ENCODE measurements at regions of chr19 and their contacts with region 1.

Region 1: DNA sequence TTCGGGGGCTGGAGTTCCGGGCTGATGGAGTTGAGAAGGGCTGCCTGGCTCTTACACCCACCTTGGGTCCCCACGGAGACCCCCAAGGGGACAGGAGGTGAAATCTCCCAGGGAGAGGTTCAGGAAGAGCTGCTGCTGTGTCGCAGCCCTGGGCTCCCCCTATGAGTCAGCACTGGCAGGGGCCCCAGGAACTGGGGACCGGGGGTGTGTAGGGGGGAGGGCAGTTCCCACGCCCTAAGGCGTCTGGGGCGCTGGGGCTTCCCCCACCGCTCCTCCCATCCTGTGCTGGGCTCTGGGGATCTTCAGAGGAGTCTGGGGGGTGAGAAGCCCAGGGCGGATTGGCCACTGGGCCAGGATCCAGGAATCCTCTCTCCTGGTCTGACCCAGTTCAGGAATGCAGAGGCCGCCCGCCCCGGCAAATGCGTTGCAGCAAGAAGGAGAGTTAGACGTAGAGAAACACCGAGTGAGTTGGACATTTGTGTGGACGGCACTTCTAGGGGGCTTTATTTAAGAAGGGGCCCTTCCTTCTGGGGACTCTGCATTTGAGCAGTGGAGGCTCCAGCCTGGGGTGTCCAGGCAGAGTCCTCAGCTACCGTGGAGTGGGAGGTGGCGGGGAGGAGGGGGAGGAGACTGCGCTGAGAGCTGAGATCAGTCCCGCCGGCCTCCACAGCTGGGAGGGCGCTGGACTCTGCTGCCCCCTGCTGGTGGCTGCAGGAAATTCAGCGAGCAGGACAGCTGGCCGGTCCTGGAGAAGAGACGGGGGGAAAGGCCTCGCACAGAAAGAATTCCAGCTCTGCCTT is 15.0 kb upstream of the NANOS3 start:
- DNase-seq: peak; percentile 72 to 93 (median 83)
- ATAC-seq: peak; percentile 92
- H3K4me3 ChIP-seq: peak overlapping the region; percentile 79
- H3K4me3 Mint-ChIP-seq: peak overlapping the region; percentile 83 to 98 (median 94)
- H3K27ac ChIP-seq: peak overlapping the region; percentile 86
- H3K27ac Mint-ChIP-seq: peak overlapping the region; percentile 70 to 99 (median 93)
- H3K4me1 ChIP-seq: peaks cover 13 to 20% of the 10 kb centered on the region in 2 donors
- H3K4me1 Mint-ChIP-seq: peaks cover 21 to 42% (median 23%) of the 10 kb centered on the region in 7 donors
- H3K27me3 ChIP-seq: peaks cover 7 to 12% of the 10 kb centered on the region in 2 donors
- H3K27me3 Mint-ChIP-seq: peaks cover 19 to 32% (median 20%) of the 10 kb centered on the region in 5 donors

Region 2: DNA sequence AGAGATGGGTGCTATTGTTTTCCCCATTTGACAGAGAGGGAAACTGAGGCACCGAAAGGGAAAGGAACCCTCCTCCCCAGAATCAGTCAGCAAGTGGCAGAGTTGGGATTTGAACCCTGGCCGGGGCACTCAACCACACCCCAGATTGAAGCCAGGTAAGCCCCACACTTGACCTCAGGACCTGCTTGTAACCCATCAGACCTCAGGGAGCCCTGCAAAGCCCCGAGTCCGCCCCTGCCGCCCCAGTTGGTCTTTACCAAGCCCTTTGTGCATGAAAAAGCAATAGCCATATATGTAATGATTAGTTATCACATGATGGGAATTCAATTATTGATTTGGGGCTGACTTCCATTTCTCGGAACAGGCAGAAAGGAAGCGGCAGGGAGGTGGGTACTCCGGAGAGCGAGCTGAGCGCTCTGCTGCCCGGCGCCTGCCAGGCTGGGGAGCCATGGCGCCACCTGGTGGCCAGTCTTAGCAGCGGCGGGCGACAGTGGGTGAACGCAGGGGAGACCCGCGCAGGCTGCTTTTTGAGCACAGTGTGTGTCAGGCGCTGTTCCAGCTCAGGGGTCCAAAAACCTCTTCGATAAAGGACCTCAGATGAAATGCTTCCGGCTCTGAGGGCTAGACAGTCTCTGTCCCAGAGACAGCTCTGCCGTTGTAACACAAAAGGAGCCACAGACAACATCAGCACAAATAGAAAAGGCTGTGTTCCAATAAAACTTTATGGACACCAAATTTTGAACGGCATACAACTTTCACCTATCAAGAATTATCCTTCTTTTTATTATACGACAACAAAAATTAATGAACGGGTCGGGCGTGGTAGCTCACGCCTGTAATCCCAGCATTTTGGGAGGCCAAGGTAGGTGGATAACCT is 272.7 kb before region 1 on chr19:
- CTCF ChIA-PET with region 1: interaction called, 4 read pairs
- POLR2A ChIA-PET with region 1: no interaction called
- intact Hi-C with region 1: loop called in 1 of 2 experiments (anchors 2 kb)
- DNase-seq: peak; percentile 59 to 91 (median 82)
- ATAC-seq: peak; percentile 98
- H3K4me3 ChIP-seq: no peak overlapping the region
- H3K4me3 Mint-ChIP-seq: peak overlapping the region in 2 of 10 donors; percentile 26 to 27
- H3K27ac ChIP-seq: no peak overlapping the region
- H3K27ac Mint-ChIP-seq: no peak overlapping the region
- H3K4me1 ChIP-seq: peaks cover 0 to 4% of the 10 kb centered on the region in 2 donors
- H3K4me1 Mint-ChIP-seq: peaks cover 0 to 2% (median 0%) of the 10 kb centered on the region in 7 donors
- H3K27me3 ChIP-seq: peaks cover 0 to 4% of the 10 kb centered on the region in 2 donors
- H3K27me3 Mint-ChIP-seq: peaks cover 0 to 18% (median 10%) of the 10 kb centered on the region in 5 donors

Region 3: GRCh38 chr19:13731147-13731964 is 130.6 kb before region 1 on chr19:
- CTCF ChIA-PET with region 1: interaction called, 4 read pairs
- POLR2A ChIA-PET with region 1: interaction called, 4 read pairs
- intact Hi-C with region 1: loop called in 1 of 2 experiments (anchors 5 kb)
- DNase-seq: peak; percentile 85 to 95 (median 91)
- ATAC-seq: peak; percentile 100
- H3K4me3 ChIP-seq: peak overlapping the region; percentile 89
- H3K4me3 Mint-ChIP-seq: peak overlapping the region; percentile 82 to 95 (median 92)
- H3K27ac ChIP-seq: peak overlapping the region; percentile 75
- H3K27ac Mint-ChIP-seq: peak overlapping the region; percentile 68 to 95 (median 88)
- H3K4me1 ChIP-seq: peaks cover 3 to 7% of the 10 kb centered on the region in 2 donors
- H3K4me1 Mint-ChIP-seq: peaks cover 6 to 19% (median 11%) of the 10 kb centered on the region in 7 donors
- H3K27me3 ChIP-seq: no peaks in the 10 kb centered on the region
- H3K27me3 Mint-ChIP-seq: no peaks in the 10 kb centered on the region

Region 4: DNA sequence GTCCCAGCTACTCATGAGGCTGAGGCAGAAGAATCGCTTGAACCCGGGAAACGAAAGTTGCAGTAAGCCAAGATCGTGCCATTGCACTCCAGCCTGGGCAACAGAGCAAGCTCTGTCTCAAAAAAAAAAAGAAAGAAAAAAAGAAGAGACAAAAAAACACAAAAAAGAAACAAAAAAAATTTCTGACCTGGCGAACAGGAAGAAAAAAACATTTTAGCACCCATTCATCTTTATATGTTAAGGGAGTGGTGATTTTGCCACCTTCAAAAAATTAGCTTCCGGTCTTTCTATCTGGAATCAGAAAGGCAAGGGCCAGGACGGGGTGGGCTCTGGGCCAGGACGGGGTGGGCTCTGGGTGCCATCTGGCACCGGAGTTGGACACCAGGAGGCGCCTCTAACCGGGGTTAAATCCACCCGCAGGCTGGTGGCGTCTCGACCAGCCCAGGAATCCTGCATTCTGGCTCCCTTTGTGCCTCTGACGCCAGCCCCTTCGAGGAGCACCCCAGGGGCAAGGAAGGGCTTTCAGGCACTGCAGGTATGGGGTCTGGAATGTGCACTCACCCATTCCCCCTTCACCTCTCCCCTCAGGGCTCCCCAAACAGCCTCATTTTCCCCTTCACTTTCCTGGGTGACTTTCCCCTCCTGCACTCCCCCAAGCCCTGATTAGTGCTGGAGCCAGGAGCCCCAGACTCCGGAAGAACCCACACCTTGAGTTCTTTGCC is 77.0 kb before region 1 on chr19:
- CTCF ChIA-PET with region 1: interaction called, 227 read pairs
- POLR2A ChIA-PET with region 1: interaction called, 86 read pairs
- intact Hi-C with region 1: loop called (anchors 1 kb)
- DNase-seq: peak; percentile 51 to 73 (median 63)
- ATAC-seq: peak; percentile 87
- H3K4me3 ChIP-seq: no peak overlapping the region
- H3K4me3 Mint-ChIP-seq: peak overlapping the region; percentile 51 to 72 (median 68)
- H3K27ac ChIP-seq: no peak overlapping the region
- H3K27ac Mint-ChIP-seq: peak overlapping the region; percentile 58 to 90 (median 80)
- H3K4me1 ChIP-seq: peaks cover 28 to 32% of the 10 kb centered on the region in 2 donors
- H3K4me1 Mint-ChIP-seq: peaks cover 7 to 46% (median 32%) of the 10 kb centered on the region in 7 donors
- H3K27me3 ChIP-seq: no peaks in the 10 kb centered on the region
- H3K27me3 Mint-ChIP-seq: no peaks in the 10 kb centered on the region

Region 5: GRCh38 chr19:13839130-13839937 is 22.6 kb before region 1 on chr19:
- CTCF ChIA-PET with region 1: interaction called, 13 read pairs
- POLR2A ChIA-PET with region 1: interaction called, 12 read pairs
- intact Hi-C with region 1: loop called (anchors 1 kb)
- DNase-seq: peak; percentile 53 to 90 (median 59)
- ATAC-seq: peak; percentile 21
- H3K4me3 ChIP-seq: peak overlapping the region; percentile 50
- H3K4me3 Mint-ChIP-seq: peak overlapping the region; percentile 76 to 96 (median 86)
- H3K27ac ChIP-seq: peak overlapping the region; percentile 91
- H3K27ac Mint-ChIP-seq: peak overlapping the region; percentile 90 to 98 (median 94)
- H3K4me1 ChIP-seq: peaks cover 67 to 76% of the 10 kb centered on the region in 2 donors
- H3K4me1 Mint-ChIP-seq: peaks cover 11 to 78% (median 55%) of the 10 kb centered on the region in 7 donors
- H3K27me3 ChIP-seq: no peaks in the 10 kb centered on the region
- H3K27me3 Mint-ChIP-seq: no peaks in the 10 kb centered on the region

Region 6: DNA sequence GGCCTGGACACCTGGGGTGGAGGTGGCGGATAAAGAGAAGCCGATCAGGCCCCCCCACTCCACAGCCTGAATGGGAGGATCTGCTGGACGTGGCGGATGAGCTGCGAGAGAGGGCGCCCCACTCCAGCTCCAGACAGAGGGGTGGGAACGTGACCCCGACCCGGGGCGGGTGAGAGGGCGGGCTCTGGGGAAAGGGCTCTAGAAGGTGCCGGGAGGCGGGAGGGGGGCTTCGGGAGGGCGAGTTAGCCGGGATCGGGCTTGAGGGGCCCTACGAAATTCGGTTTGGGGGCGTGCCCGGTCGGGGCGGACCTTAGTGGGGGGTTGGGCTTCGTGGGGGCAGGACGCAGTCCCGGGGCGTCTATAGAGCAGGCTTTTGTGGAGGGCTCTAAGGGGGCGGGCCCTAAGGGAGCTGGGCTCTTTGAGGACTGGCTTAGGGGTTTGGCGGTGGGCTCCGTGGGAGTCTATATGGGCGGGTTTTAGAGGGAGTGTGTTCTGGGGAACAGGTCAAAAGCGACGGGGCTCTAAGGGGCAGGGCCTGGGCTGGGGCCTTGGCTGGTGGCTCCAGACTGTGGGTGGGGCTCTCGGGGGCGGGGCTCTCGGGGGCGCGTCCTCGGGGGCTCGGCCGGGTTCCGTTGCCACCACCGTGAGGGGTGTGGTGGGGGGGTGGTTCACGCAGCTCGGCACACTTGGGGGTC is 10.9 kb after region 1 on chr19:
- CTCF ChIA-PET with region 1: interaction called, 10 read pairs
- POLR2A ChIA-PET with region 1: no interaction called
- intact Hi-C with region 1: no loop called
- DNase-seq: peak in 2 of 9 donors; percentile 37 to 50
- ATAC-seq: peak; percentile 82
- H3K4me3 ChIP-seq: no peak overlapping the region
- H3K4me3 Mint-ChIP-seq: peak overlapping the region; percentile 25 to 83 (median 72)
- H3K27ac ChIP-seq: no peak overlapping the region
- H3K27ac Mint-ChIP-seq: peak overlapping the region in 3 of 9 donors; percentile 42 to 65 (median 48)
- H3K4me1 ChIP-seq: peaks cover 0 to 4% of the 10 kb centered on the region in 2 donors
- H3K4me1 Mint-ChIP-seq: peaks cover 0 to 9% (median 3%) of the 10 kb centered on the region in 7 donors
- H3K27me3 ChIP-seq: no peaks in the 10 kb centered on the region
- H3K27me3 Mint-ChIP-seq: peaks cover 7 to 27% (median 9%) of the 10 kb centered on the region in 5 donors

Measured in naive thymus-derived CD4-positive, alpha-beta T cell (primary cell).